ENCODE measurements at regions of chr12 and their contacts with region 1.

Region 1: DNA sequence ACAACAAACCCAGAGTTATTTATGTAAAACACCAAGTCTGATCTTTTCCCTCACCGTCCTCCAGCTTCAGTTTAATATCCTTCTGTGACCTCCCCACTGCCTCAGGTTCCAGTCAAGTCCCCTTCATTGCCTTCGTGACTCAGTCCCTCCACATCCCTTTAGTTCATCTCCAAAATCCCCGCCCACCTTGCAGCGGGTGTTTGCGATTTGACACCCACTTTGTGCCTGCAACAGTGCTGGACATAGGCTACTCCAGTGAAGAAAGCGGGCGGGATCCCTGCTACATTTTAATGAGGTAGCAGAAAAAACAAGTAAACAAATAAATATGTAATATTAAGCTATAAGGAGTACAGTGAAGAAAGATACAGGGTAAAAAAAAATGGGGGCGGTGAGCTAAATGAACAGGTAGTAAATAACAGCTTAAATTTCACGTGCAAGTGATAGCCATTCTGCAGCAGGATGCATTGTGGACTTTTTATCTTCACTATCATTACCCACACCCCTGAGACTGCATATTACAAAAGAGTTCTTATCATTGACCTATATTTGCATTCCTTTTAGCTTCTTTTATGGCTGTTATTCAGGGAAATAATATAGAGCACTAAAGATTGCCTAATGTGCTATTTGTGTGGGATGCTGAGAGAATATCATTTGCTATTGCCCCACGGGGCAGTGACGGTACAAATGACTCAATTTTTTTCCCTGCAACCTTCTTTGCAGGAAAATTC is 222.8 kb upstream of the NUDT4 start:
- DNase-seq: peak; percentile 64 to 68
- H3K4me3 ChIP-seq: no peak overlapping the region
- H3K4me3 Mint-ChIP-seq: peak overlapping the region; percentile 56
- H3K27ac Mint-ChIP-seq: peak overlapping the region; percentile 80
- H3K4me1 ChIP-seq: peaks cover 41% of the 10 kb centered on the region
- H3K4me1 Mint-ChIP-seq: peaks cover 38% of the 10 kb centered on the region
- H3K27me3 ChIP-seq: no peaks in the 10 kb centered on the region
- H3K27me3 Mint-ChIP-seq: no peaks in the 10 kb centered on the region
- CTCF ChIP-seq: no peak

Region 2: GRCh38 chr12:93042283-93042682 is 112.6 kb before region 1 on chr12:
- CTCF ChIA-PET with region 1: interaction called, 4 read pairs
- POLR2A ChIA-PET with region 1: no interaction called
- intact Hi-C with region 1: loop called (anchors 1 kb)
- DNase-seq: peak; percentile 72 to 84
- H3K4me3 ChIP-seq: no peak overlapping the region
- H3K4me3 Mint-ChIP-seq: peak overlapping the region; percentile 37
- H3K27ac Mint-ChIP-seq: peak overlapping the region; percentile 87
- H3K4me1 ChIP-seq: peaks cover 46% of the 10 kb centered on the region
- H3K4me1 Mint-ChIP-seq: peaks cover 51% of the 10 kb centered on the region
- H3K27me3 ChIP-seq: no peaks in the 10 kb centered on the region
- H3K27me3 Mint-ChIP-seq: no peaks in the 10 kb centered on the region
- CTCF ChIP-seq: no peak

Region 3: DNA sequence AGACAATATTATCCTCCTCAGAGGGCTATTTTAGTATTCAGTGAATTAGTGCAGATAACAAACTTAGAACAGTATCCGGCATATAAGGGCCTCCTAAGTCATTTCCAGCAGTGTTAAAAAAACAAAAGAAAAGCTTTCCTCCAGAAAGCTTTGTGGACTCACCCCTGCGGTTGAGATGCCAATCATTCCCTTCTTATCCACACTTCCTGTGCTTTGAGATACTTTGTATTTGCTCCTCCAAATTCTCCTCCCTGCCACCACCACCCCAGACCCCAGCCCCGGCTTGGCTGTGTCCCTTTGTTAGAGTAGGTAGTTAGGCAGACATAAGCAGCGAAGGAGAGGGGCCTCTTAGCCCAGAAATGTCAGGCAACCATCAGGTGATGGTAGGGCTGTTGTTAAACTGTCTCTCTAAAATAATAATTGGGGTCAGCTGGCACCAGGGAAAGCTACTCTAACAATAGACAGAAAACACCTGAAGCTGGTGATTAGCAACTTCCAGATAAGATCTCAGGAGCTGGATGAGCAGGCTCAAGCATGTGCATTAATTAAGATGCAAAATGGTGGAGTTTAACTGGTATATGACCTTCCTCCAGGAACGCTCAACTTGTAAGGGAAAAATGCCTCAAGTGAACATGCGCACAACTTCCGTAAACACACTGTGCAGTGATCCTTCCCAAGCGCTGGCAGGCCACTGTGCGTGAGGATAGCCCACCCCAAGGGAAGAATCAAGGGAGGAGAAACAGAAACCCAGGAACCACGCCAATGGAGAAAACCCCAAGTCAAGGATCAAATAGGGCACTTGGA is 73.7 kb before region 1 on chr12:
- CTCF ChIA-PET with region 1: no interaction called
- POLR2A ChIA-PET with region 1: no interaction called
- intact Hi-C with region 1: no loop called
- DNase-seq: peak; percentile 74 to 86
- H3K4me3 ChIP-seq: no peak overlapping the region
- H3K4me3 Mint-ChIP-seq: peak overlapping the region; percentile 50
- H3K27ac Mint-ChIP-seq: peak overlapping the region; percentile 92
- H3K4me1 ChIP-seq: peaks cover 51% of the 10 kb centered on the region
- H3K4me1 Mint-ChIP-seq: peaks cover 36% of the 10 kb centered on the region
- H3K27me3 ChIP-seq: no peaks in the 10 kb centered on the region
- H3K27me3 Mint-ChIP-seq: no peaks in the 10 kb centered on the region
- CTCF ChIP-seq: no peak

Region 4: DNA sequence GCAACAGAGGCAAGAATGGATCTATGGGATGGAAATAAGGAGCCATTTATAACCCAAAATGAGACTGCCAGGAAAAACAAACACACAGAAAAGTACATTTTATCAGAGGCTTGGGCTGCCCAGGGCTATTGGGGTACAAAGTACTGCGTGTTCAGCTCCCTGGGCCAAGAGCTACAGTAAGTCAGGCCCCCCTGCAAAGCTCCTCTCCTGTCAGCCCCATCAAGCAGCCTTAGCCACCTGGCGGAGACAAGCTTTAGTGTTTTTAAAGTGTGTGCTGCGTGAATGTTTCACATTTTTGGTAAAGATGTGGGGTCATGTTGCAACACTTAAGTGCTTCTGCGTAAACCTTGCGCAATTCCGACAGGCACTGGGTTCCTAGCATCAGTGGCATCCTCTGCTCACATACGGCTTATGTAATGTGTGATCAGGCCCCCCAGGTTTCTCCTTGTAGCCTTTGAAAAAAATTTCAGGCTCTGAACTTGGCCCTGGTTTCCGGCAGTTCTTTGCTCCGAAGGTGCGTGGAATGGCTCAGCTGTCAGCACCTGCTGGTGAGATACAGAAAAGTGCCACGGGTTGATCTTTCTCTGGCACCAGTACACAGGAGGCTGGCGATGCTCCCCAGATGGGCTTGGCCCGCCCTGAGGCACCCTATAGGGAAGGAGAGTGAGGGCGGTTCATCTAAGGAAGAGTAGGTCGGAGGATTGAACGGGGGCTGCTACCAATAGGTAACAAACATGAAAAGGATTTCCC is 27.2 kb before region 1 on chr12:
- CTCF ChIA-PET with region 1: interaction called, 10 read pairs
- POLR2A ChIA-PET with region 1: interaction called, 4 read pairs
- intact Hi-C with region 1: loop called (anchors 1 kb)
- DNase-seq: peak; percentile 89 to 93
- H3K4me3 ChIP-seq: no peak overlapping the region
- H3K4me3 Mint-ChIP-seq: peak overlapping the region; percentile 37
- H3K27ac Mint-ChIP-seq: peak overlapping the region; percentile 94
- H3K4me1 ChIP-seq: peaks cover 36% of the 10 kb centered on the region
- H3K4me1 Mint-ChIP-seq: peaks cover 43% of the 10 kb centered on the region
- H3K27me3 ChIP-seq: no peaks in the 10 kb centered on the region
- H3K27me3 Mint-ChIP-seq: no peaks in the 10 kb centered on the region
- CTCF ChIP-seq: peak; percentile 57 to 65

Region 5: DNA sequence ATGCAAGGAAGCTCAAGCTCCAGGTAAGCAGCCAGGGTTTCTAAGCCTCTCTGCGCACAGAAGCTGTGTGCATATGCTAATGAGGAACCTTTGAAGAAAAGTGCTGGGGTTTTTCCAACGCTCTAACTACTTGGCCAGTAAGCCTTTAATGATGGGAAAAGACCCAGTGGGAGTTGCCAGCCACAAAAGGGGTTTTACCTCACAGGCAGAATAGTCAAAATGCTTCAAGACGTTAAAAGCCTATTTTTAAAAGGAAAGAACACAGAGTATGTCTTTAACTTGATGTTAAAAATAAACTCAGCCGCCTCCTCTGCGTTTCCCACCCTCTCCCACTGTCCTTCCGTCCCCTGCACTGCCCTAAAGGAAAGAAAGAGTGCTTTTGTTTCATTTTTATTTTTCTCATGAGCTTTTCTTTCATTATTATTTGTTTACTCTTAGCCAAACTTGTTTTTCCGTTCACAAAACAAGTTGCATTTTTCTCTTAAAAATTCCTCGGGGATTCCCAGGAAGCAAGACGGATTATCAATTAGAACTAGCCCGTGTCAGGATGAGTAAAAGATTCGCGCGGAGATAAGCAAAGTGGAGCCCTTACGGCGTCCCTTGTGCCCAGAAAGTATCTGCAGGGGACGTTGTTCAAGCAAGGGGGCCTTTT is 13.1 kb after region 1 on chr12:
- CTCF ChIA-PET with region 1: interaction called, 3 read pairs
- POLR2A ChIA-PET with region 1: no interaction called
- intact Hi-C with region 1: loop called (anchors 1 kb)
- DNase-seq: peak in 1 of 2 experiments; percentile 48
- H3K4me3 ChIP-seq: peak overlapping the region; percentile 28
- H3K4me3 Mint-ChIP-seq: peak overlapping the region; percentile 72
- H3K27ac Mint-ChIP-seq: peak overlapping the region; percentile 85
- H3K4me1 ChIP-seq: peaks cover 44% of the 10 kb centered on the region
- H3K4me1 Mint-ChIP-seq: peaks cover 41% of the 10 kb centered on the region
- H3K27me3 ChIP-seq: no peaks in the 10 kb centered on the region
- H3K27me3 Mint-ChIP-seq: no peaks in the 10 kb centered on the region
- CTCF ChIP-seq: no peak

Region 6: GRCh38 chr12:93176165-93176564 is 21.2 kb after region 1 on chr12:
- CTCF ChIA-PET with region 1: no interaction called
- POLR2A ChIA-PET with region 1: interaction called, 4 read pairs
- intact Hi-C with region 1: loop called (anchors 1 kb)
- DNase-seq: no peak
- H3K4me3 ChIP-seq: no peak overlapping the region
- H3K4me3 Mint-ChIP-seq: no peak overlapping the region
- H3K27ac Mint-ChIP-seq: peak overlapping the region; percentile 87
- H3K4me1 ChIP-seq: peaks cover 24% of the 10 kb centered on the region
- H3K4me1 Mint-ChIP-seq: peaks cover 24% of the 10 kb centered on the region
- H3K27me3 ChIP-seq: no peaks in the 10 kb centered on the region
- H3K27me3 Mint-ChIP-seq: no peaks in the 10 kb centered on the region
- CTCF ChIP-seq: no peak

Measured in Caco-2 (cell line).